Gastrocnemius medialis (tissue), 4 donors: ENCODE measurements at regions of chr1 and their contacts with region 1.

Region 1: GRCh38 chr1:162899422-162900146 is 38.6 kb upstream of the CCDC190 start:
- DNase-seq: peak; percentile 60 to 66
- ATAC-seq: peak; percentile 97 to 98
- H3K4me3 ChIP-seq: no peak overlapping the region
- H3K27ac ChIP-seq: peak overlapping the region; percentile 81 to 91 (median 85)
- H3K4me1 ChIP-seq: peaks cover 40 to 52% of the 10 kb centered on the region in 2 donors
- H3K27me3 ChIP-seq: no peaks in the 10 kb centered on the region
- CTCF ChIP-seq: no peak
- POLR2A ChIP-seq: no peak

Region 2: GRCh38 chr1:162639718-162640117 is 259.9 kb before region 1 on chr1:
- in situ Hi-C with region 1: no loop called
- intact Hi-C with region 1: no loop called
- DNase-seq: no peak
- ATAC-seq: no peak
- H3K4me3 ChIP-seq: no peak overlapping the region
- H3K27ac ChIP-seq: no peak overlapping the region
- H3K4me1 ChIP-seq: no peaks in the 10 kb centered on the region
- H3K27me3 ChIP-seq: no peaks in the 10 kb centered on the region
- CTCF ChIP-seq: no peak
- POLR2A ChIP-seq: no peak

Region 3: DNA sequence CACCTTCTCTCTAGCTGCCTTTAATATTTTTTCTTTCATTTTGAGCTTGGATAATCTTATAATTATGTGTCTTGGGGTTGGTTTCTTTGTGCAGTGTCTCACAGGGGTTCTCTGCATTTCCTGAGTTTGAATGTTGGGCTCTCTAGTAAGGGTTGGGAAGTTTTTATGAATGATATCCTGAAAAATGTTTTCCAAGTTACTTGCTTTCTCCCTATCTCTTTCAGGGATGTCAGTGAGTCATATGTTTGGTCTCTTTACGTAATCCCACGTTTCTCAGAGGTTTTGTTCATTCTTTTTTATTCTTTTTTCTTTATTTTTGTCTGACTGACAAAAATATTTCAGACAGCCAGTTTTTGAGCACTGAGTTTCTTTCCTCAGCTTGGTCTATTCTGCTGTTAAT is 16.8 kb after region 1 on chr1:
- in situ Hi-C with region 1: no loop called
- intact Hi-C with region 1: no loop called
- DNase-seq: no peak
- ATAC-seq: no peak
- H3K4me3 ChIP-seq: no peak overlapping the region
- H3K27ac ChIP-seq: no peak overlapping the region
- H3K4me1 ChIP-seq: peaks cover 6% of the 10 kb centered on the region in 2 donors
- H3K27me3 ChIP-seq: no peaks in the 10 kb centered on the region
- CTCF ChIP-seq: no peak
- POLR2A ChIP-seq: no peak

Region 4: DNA sequence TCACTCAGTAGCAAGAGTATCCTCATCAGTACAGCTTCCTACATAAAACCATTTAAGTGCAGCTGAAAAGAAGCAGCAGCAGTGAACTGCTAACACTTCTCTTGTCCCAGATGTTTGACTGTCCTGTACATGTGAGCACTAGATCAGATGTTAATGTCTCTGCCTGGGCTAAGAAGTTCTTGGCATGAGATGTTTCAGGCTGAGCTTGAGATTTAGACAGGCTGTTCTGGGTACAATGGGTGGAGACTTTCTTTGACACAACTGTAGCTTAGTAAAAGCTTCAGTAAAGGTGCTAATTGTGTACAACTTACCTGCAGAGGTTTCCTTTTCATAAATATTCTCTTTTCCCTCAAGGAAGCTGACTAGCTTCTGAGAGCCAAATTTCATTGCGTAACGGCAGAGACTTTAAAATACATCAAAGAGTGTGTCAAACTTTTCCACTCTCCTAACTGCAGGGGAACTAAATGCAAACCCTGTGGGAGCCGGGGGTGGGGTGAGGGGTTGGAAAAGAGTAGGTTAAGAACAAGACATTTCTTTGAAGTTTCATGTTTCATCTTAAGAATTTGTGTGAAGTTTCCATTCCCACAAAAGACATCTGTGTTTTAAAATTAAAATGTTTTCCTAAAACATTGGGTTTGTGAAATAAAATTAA is 43.5 kb after region 1 on chr1:
- in situ Hi-C with region 1: no loop called
- intact Hi-C with region 1: loop called (anchors 2 kb)
- DNase-seq: peak; percentile 39 to 41
- ATAC-seq: peak; percentile 88 to 95
- H3K4me3 ChIP-seq: peak overlapping the region in 1 of 4 donors; percentile 10
- H3K27ac ChIP-seq: peak overlapping the region; percentile 68 to 89 (median 80)
- H3K4me1 ChIP-seq: peaks cover 16 to 30% of the 10 kb centered on the region in 2 donors
- H3K27me3 ChIP-seq: no peaks in the 10 kb centered on the region
- CTCF ChIP-seq: no peak
- POLR2A ChIP-seq: no peak

Region 5: DNA sequence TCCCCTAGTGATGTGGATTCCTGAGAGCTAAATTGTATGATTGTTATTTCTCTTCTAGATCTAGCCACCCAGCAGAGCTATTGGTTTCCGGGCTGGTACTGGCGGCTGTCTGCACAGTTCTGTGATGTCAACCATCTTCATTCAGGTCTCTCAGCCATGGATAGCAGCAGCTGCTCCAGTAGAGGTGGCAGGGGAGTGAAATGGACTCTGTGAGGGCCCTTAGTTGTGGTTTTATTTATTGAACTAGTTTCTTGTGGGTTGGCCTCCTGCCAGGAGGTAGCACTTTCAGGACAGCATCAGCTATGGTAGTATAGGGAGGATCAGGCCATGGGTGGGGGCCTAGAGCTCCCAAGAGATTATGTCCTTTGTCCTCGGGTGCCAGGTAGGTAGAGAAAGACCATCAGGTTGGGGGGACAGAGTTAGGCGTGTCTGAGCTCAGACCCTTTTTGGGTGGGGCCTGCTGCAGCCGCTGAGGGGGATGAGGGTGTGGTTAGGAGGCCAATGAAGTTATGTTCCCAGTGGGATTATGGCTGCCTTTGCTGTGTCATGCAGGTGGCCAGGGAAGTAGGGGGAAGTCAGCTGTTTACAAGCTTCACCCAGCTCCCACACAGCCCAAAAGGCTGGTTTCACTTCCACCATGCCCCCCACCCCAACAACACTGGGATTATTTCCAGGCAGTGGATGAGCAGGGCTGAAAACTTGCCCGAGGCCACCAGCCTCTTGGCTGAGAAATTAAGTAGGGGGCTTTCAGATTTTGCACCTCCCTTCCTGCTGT is 114.4 kb after region 1 on chr1:
- in situ Hi-C with region 1: no loop called
- intact Hi-C with region 1: no loop called
- DNase-seq: no peak
- ATAC-seq: no peak
- H3K4me3 ChIP-seq: no peak overlapping the region
- H3K27ac ChIP-seq: no peak overlapping the region
- H3K4me1 ChIP-seq: no peaks in the 10 kb centered on the region
- H3K27me3 ChIP-seq: no peaks in the 10 kb centered on the region
- CTCF ChIP-seq: no peak
- POLR2A ChIP-seq: no peak